ENCODE measurements at regions of chr2 and their contacts with region 1.

Region 1: DNA sequence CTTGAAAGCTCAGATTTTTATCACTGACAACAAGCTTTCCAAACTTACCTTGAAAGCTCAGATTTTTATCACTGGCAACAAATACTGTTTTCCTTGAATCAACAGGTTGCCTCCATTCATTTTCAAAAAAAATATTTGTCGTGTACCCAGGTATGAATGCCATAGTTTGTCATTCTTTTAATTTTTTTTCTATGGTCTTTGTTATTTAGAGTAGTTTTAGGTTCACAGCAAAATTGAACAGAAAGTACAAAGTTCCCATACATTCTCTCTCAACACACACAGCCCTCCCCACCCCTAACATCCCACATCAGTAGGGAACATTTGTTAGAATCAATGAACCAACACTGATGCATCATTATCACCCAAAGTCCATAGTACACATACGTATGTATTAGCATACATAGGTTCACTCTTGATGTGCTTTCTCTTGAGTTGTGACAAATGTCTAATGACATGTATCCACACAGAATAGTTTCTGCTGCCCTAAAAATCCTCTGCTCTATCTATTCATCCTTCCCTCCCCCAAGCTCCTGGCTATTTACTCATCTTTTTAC is 25.9 kb downstream of the WDR33 start:
- DNase-seq: no peak
- H3K4me3 Mint-ChIP-seq: no peak overlapping the region
- H3K27ac Mint-ChIP-seq: no peak overlapping the region
- H3K4me1 Mint-ChIP-seq: peaks cover 12% of the 10 kb centered on the region
- H3K27me3 Mint-ChIP-seq: no peaks in the 10 kb centered on the region

Region 2: DNA sequence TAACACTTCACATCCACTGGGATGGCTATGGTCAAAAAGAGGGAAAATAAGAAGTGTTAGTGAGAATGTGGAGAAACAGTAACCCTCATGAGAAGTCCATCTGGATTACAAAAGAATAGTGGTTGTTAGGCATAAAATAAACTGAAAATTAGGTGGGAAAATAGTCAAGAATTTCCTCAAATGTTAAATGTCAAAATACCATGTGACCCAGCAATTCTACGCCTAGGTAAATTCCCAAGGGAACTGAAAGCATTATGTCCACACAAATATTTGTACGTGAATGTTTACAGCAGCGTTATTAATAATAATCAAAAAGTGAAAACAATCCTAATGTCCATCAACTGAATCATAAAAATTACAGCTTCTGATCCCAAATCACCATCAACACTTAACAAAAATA is 14.9 kb after region 1 on chr2:
- intact Hi-C with region 1: loop called (anchors 2 kb)
- DNase-seq: no peak
- H3K4me3 Mint-ChIP-seq: no peak overlapping the region
- H3K27ac Mint-ChIP-seq: no peak overlapping the region
- H3K4me1 Mint-ChIP-seq: peaks cover 24% of the 10 kb centered on the region
- H3K27me3 Mint-ChIP-seq: no peaks in the 10 kb centered on the region

Measured in activated T-helper 1 cell treated with anti-CD3 and anti-CD28 coated beads, Interleukin-12 subunit alpha, Interleukin-12 subunit beta, Interleukin-2, Interleukin-4 antibody, amounts not matched to agents 30 ng/mL and 10 ng/mL and 1 ng/mL, durations not matched to agents 14 hours and 24 hours and 36 hours (primary cell).